SK-N-SH (cell line): ENCODE measurements at regions of chr1 and their contacts with region 1.

Region 1: GRCh38 chr1:150561974-150562445 is 12.8 kb downstream of the ADAMTSL4 start:
- DNase-seq: peak; percentile 86
- H3K4me3 ChIP-seq: peak overlapping the region; percentile 56 to 69
- H3K27ac ChIP-seq: peak overlapping the region; percentile 99 to 100
- H3K4me1 ChIP-seq: peaks cover 35 to 40% of the 10 kb centered on the region in 2 experiments
- H3K27me3 ChIP-seq: no peaks in the 10 kb centered on the region
- CTCF ChIP-seq: no peak
- EP300 ChIP-seq: peak; percentile 85 to 95
- RAD21 ChIP-seq: no peak

Region 2: DNA sequence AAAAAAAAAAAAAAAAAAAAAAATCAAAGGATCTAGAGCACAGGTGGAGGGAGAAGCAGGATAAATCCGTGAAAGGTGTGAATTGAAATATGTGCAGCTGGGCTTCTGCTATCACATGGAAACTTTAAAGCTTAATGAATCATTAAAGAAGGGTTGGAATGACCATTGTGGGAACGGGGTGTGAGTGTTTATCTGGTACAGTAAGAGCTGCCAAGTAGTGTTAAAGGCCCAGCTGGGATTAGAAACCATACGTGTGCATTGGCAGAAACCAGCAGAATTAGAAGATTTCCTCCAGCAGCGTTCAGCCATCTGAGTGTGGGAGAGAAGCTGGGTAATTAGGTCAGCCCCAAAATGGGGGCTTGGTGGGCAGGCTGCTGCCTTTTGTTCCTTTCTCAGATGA is 33.0 kb before region 1 on chr1:
- CTCF ChIA-PET with region 1: interaction called, 12 read pairs
- POLR2A ChIA-PET with region 1: no interaction called
- DNase-seq: no peak
- H3K4me3 ChIP-seq: no peak overlapping the region
- H3K27ac ChIP-seq: no peak overlapping the region
- H3K4me1 ChIP-seq: peaks cover 4 to 5% of the 10 kb centered on the region in 2 experiments; a peak in 1 of 4 replicates
- H3K27me3 ChIP-seq: no peaks in the 10 kb centered on the region
- CTCF ChIP-seq: no peak
- EP300 ChIP-seq: no peak
- RAD21 ChIP-seq: no peak

Region 3: DNA sequence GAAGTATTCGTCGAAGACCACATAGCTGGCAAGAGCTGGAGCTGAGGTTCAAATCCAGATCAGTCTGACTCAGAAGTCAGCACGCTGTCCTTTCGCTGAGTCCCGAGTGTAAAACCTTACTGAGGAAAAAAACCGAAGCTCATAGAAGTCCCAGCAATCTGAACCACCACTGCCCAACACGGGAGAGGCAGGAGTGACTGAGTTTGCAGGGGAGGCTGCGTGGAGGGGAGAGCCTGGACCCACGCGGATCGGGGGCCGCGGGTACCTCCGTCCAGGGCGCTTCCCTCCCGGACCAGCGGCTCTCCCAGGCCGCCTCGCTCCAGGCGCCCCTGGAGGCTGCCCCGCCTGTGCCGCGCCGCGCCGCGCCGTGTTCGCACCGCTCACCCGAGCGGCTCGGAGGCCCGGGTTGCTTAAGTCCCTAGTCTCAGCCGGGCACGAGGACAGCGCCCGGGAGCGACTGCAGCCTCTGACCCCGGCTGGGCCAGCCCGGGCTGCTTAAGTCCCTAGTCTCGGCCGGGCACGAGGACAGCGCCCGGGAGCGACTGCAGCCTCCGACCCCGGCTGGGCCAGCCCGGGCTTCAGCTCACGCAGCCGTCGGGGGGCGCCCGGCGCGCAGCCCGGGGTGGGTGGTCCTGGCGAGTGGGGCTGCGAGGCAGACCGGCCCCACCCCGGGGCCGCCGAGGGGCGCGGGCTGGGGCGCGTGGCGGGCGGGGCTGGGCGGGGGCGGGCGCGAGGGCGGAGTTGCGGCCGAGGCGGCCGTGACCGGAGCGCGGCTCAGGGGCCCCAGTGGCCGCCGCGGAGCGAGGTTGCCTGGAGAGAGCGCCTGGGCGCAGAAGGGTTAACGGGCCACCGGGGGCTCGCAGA is 13.1 kb before region 1 on chr1 and contains the start of gene ADAMTSL4:
- CTCF ChIA-PET with region 1: interaction called, 88 read pairs
- POLR2A ChIA-PET with region 1: interaction called, 4 read pairs
- DNase-seq: peak; percentile 90
- H3K4me3 ChIP-seq: peak within 1 kb of the TSS; percentile 51 to 61
- H3K27ac ChIP-seq: peak within 1 kb of the TSS in 1 of 2 experiments; percentile 39; a peak in 2 of 4 replicates
- H3K4me1 ChIP-seq: peaks cover 8 to 13% of the 10 kb centered on the region in 2 experiments; a peak in 2 of 4 replicates
- H3K27me3 ChIP-seq: no peaks in the 10 kb centered on the region
- CTCF ChIP-seq: peak; percentile 27; the same call in 1 of the 2 replicates
- EP300 ChIP-seq: no peak
- RAD21 ChIP-seq: no peak
- polyA plus RNA-seq, gene ADAMTSL4: 2.4 and 3.4 TPM in 2 replicates

Region 4: DNA sequence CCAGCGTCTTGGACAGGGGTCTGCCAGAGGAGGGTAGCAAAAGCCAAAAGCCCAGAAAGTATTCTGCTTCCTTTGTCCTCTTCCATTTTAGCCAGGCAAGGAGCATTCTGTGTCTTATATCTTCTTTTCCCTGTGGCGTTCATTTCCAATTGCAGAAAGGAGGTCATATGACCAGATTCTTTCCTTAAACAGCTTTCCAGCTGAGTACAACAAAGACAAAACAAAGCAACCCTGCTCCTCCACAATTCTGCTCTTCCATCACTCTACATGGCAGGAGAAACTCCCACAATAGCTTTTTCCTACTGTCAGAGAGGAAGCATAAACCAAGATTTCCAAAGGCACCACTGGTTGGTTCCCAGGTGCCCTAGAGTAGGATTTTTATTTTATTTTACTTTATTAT is 47.7 kb after region 1 on chr1:
- CTCF ChIA-PET with region 1: interaction called, 20 read pairs
- POLR2A ChIA-PET with region 1: no interaction called
- DNase-seq: no peak
- H3K4me3 ChIP-seq: no peak overlapping the region
- H3K27ac ChIP-seq: peak overlapping the region in 1 of 2 experiments; percentile 97; a peak in 1 of 4 replicates
- H3K4me1 ChIP-seq: peaks cover 3 to 43% of the 10 kb centered on the region in 2 experiments; a peak in 3 of 4 replicates
- H3K27me3 ChIP-seq: no peaks in the 10 kb centered on the region
- CTCF ChIP-seq: no peak
- EP300 ChIP-seq: no peak
- RAD21 ChIP-seq: no peak

Region 5: GRCh38 chr1:150629115-150629928 is 67.3 kb after region 1 on chr1 and contains the start of gene ENSA:
- CTCF ChIA-PET with region 1: interaction called, 13 read pairs
- POLR2A ChIA-PET with region 1: interaction called, 5 read pairs
- DNase-seq: peak; percentile 87
- H3K4me3 ChIP-seq: peak within 1 kb of the TSS; percentile 84 to 86
- H3K27ac ChIP-seq: peak within 1 kb of the TSS; percentile 89 to 91
- H3K4me1 ChIP-seq: peaks cover 14 to 16% of the 10 kb centered on the region in 2 experiments
- H3K27me3 ChIP-seq: no peaks in the 10 kb centered on the region
- CTCF ChIP-seq: no peak
- EP300 ChIP-seq: peak in 1 of 2 experiments; percentile 4; a peak in 1 of 4 replicates
- RAD21 ChIP-seq: no peak
- polyA plus RNA-seq, gene ENSA: 47.4 and 56.3 TPM in 2 replicates

Region 6: DNA sequence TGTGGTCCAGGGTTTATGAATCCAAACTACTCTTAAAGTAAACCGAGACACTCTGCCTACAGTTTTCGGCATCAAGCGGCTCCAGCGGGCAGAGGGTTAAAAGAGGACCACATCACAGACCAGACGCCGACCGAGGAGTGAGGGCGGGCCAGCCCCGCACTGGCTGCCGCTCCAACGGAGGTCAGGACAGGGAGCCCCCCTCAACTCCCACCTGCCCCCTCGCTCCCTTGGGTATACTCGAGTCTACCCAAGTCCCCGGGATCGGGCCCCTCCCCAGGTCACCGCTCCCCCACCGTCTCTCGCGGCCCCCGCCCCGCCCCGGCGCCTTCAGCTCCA is 314.1 kb after region 1 on chr1:
- CTCF ChIA-PET with region 1: no interaction called
- POLR2A ChIA-PET with region 1: no interaction called
- DNase-seq: no peak
- H3K4me3 ChIP-seq: peak overlapping the region; percentile 59 to 75
- H3K27ac ChIP-seq: peak overlapping the region; percentile 76 to 89
- H3K4me1 ChIP-seq: peaks cover 0 to 10% of the 10 kb centered on the region in 2 experiments; a peak in 2 of 4 replicates
- H3K27me3 ChIP-seq: no peaks in the 10 kb centered on the region
- CTCF ChIP-seq: no peak
- EP300 ChIP-seq: no peak
- RAD21 ChIP-seq: no peak

Region 7: DNA sequence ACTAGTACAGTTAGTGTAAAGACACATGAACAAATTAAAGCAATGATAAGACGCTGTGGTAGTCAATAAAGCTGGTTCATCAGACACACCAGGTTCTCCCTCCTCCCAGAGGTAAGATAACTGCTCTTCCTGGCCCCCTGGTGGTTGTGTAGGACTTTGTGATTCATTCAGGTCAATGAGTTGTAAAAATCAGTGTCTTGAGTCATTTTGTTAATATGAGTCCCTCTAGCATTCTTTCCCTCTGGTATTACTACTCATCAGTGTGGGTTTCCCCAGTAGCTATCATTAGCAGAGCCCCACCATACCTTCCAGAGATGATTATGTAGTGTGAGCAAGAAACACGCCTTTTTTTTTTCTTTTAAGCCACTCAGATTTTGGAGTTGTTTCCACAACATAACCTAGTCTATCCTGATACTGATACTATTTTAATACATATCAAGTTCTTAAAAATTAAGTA is 360.5 kb after region 1 on chr1:
- CTCF ChIA-PET with region 1: interaction called, 17 read pairs
- POLR2A ChIA-PET with region 1: no interaction called
- DNase-seq: peak; percentile 74
- H3K4me3 ChIP-seq: no peak overlapping the region; a peak in 1 of 4 replicates
- H3K27ac ChIP-seq: peak overlapping the region in 1 of 2 experiments; percentile 33; a peak in 1 of 4 replicates
- H3K4me1 ChIP-seq: peaks cover 5 to 13% of the 10 kb centered on the region in 2 experiments; a peak in 2 of 4 replicates
- H3K27me3 ChIP-seq: no peaks in the 10 kb centered on the region
- CTCF ChIP-seq: peak; percentile 81
- EP300 ChIP-seq: no peak
- RAD21 ChIP-seq: peak; percentile 79